Activated T-helper 1 cell treated with anti-CD3 and anti-CD28 coated beads, Interleukin-12 subunit alpha, Interleukin-12 subunit beta, Interleukin-2, Interleukin-4 antibody, amounts not matched to agents 30 ng/mL and 10 ng/mL and 1 ng/mL, durations not matched to agents 14 hours and 24 hours and 36 hours (primary cell): ENCODE measurements at regions of chr5 and their contacts with region 1.

Region 1: GRCh38 chr5:171961117-171961516 is 45.3 kb downstream of the FBXW11 start:
- DNase-seq: no peak
- H3K4me3 Mint-ChIP-seq: peak overlapping the region; percentile 13
- H3K27ac Mint-ChIP-seq: peak overlapping the region; percentile 76
- H3K4me1 Mint-ChIP-seq: peaks cover 81% of the 10 kb centered on the region
- H3K27me3 Mint-ChIP-seq: no peaks in the 10 kb centered on the region

Region 2: DNA sequence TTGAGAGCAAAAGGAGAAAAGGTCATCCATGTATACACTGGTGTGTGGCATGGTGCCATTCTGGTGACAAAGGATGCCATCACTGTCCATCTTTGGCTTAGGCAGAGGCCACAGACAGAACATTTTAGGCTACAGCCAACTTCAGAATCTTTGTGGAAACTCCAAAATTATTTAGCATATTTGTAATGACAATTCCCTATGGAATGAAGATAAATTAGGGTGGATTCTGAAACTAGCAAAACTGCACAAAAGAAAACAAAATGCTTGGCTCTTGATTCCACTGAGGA is 47.2 kb before region 1 on chr5:
- intact Hi-C with region 1: loop called (anchors 2 kb)
- DNase-seq: no peak
- H3K4me3 Mint-ChIP-seq: no peak overlapping the region
- H3K27ac Mint-ChIP-seq: no peak overlapping the region
- H3K4me1 Mint-ChIP-seq: peaks cover 33% of the 10 kb centered on the region
- H3K27me3 Mint-ChIP-seq: no peaks in the 10 kb centered on the region

Region 3: DNA sequence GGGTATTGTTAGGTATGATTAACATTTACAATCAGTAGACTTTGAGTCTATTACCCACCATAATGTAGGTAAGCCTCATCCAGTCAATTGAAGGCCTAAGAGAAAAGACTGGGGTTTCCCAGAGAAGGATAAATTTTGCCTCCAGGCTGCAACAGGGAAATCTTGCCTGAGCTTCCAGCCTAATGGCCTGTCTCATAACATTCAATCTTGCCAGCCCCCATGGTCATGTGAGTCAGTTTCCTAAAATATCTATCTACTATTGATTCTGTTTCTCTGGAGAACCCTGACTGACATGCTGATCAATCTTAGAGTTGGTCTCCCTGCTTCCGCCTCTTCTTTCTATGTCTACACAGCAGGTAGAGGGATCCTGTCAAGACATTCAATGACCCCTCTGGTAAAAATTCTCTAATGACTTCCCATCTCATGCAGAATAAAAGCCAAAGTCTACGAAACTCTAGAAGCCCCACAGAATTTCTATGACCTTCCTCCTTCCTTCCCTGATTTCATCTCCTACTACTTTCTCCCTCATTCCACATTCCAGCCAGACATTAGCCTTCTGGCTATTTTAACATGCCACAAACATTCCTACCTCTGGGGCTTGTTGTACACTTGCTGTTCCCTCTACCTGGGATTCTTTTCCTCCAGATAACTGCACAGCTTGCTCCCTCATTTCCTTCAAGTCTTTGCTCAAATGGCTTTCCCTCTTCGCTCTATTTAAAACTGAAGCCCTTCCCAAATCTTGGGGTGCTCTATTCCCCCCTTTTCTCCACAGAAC is 14.9 kb before region 1 on chr5:
- intact Hi-C with region 1: loop called (anchors 2 kb)
- DNase-seq: no peak
- H3K4me3 Mint-ChIP-seq: no peak overlapping the region
- H3K27ac Mint-ChIP-seq: no peak overlapping the region
- H3K4me1 Mint-ChIP-seq: peaks cover 11% of the 10 kb centered on the region
- H3K27me3 Mint-ChIP-seq: no peaks in the 10 kb centered on the region

Region 4: DNA sequence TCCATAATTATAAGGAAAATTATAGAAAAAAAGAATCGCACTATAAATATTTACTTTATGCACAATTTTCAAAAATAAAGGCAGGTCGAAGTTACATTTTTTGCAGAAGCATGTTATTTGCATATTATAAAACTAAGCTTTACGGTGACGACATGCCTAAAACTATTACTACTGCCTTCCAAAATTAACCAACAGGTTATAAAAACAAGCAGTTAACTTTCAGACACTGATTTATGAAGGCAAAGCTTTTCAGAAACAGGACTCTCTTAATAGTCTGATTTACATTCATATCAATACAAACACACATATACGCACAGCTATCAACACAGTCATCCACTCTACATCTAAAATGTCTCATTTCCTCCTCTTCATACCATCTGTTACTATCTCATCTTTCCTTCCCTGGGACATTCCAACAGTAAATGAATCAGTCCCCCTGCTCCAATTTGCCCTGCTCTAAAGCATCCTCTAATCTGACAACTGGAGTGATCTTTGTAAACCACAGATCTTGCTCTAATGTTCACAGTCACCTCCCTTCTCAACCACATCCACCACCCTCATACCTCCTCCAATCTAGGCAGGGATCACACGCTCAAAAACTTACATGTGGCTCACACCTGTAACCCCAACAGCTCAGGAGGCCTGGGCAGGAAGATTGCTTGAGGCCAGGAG is 23.8 kb after region 1 on chr5:
- intact Hi-C with region 1: loop called (anchors 1 kb)
- DNase-seq: peak; percentile 49
- H3K4me3 Mint-ChIP-seq: no peak overlapping the region
- H3K27ac Mint-ChIP-seq: peak overlapping the region; percentile 16
- H3K4me1 Mint-ChIP-seq: peaks cover 42% of the 10 kb centered on the region
- H3K27me3 Mint-ChIP-seq: no peaks in the 10 kb centered on the region

Region 5: DNA sequence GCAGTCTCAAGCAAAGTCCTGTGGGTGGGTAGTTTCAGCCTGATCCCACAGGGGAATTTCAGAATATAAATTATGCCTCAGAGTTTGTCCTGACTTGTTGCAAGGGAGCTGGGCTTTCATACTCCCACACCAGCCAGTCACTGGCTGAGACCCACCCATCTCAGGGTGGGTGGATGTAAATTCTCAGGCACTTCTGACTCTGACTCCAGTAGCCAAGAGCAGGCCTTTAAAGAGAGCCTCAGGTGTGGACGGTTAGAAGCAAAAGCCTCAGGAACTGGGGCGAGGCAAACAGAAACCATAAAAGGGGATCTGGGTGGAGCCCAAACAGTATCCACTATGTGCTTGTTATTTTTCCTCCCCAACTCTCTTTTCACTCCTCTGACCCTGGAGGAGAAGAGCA is 73.9 kb after region 1 on chr5:
- intact Hi-C with region 1: loop called (anchors 2 kb)
- DNase-seq: no peak
- H3K4me3 Mint-ChIP-seq: no peak overlapping the region
- H3K27ac Mint-ChIP-seq: peak overlapping the region; percentile 20
- H3K4me1 Mint-ChIP-seq: peaks cover 13% of the 10 kb centered on the region
- H3K27me3 Mint-ChIP-seq: peaks cover 2% of the 10 kb centered on the region

Region 6: DNA sequence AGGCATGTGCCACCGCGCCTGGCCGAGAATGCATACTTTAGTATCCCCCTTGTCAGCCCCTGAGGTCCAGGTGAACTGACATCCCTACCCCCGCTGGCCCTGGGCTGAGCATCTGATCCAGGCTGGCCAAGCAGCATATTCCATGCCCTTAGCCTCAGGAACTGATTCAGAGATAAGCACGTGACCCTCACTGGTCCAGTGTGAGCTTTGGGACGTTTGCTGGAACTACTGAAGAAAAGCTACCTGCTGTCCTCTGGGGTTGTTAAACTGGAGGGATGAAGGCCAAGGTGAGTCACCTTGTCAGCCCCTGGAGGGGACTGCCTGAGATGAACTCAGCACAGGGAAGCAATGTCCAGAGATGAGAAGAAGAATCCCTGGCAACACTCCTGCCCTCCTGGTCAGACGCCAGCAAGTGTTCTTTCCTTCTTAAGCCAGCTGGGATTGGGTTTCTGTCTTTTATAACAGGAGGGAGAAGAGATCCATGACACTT is 104.4 kb after region 1 on chr5:
- intact Hi-C with region 1: loop called (anchors 5 kb)
- DNase-seq: no peak
- H3K4me3 Mint-ChIP-seq: no peak overlapping the region
- H3K27ac Mint-ChIP-seq: no peak overlapping the region
- H3K4me1 Mint-ChIP-seq: peaks cover 47% of the 10 kb centered on the region
- H3K27me3 Mint-ChIP-seq: no peaks in the 10 kb centered on the region

Region 7: DNA sequence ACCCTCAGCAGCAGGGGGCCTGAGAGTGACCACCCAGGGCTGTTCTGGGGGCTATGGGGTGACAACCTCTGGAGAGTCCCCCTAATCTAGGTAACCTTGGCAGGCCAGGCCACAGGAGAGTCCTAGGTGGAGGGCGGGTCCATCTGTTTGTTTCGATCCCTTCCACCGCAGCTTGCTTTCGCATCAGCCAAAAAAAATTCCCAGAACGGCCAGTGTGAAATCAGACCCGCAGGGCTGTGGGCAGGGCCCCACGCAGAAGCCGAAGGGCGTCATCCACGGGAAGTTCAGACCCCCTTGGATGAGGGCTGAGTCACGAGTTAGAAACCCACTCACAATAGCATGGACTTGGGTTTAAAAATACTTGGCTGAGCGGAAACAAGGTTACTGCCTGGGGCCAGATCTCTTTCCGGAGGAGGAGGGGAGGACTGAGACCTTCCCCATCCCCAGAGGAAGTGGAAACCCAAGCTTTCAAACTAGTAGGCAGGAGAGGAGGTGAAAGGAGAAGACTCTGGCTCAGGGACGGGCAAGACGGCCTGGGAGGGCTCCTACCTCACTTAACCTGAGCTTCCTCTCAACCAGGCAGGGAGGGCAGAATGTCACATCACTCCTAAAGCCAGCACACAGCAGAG is 218.4 kb after region 1 on chr5:
- intact Hi-C with region 1: loop called (anchors 2 kb)
- DNase-seq: peak; percentile 51
- H3K4me3 Mint-ChIP-seq: peak overlapping the region; percentile 87
- H3K27ac Mint-ChIP-seq: peak overlapping the region; percentile 100
- H3K4me1 Mint-ChIP-seq: peaks cover 87% of the 10 kb centered on the region
- H3K27me3 Mint-ChIP-seq: no peaks in the 10 kb centered on the region